ENCODE measurements at regions of chr17 and their contacts with region 1.

Region 1: DNA sequence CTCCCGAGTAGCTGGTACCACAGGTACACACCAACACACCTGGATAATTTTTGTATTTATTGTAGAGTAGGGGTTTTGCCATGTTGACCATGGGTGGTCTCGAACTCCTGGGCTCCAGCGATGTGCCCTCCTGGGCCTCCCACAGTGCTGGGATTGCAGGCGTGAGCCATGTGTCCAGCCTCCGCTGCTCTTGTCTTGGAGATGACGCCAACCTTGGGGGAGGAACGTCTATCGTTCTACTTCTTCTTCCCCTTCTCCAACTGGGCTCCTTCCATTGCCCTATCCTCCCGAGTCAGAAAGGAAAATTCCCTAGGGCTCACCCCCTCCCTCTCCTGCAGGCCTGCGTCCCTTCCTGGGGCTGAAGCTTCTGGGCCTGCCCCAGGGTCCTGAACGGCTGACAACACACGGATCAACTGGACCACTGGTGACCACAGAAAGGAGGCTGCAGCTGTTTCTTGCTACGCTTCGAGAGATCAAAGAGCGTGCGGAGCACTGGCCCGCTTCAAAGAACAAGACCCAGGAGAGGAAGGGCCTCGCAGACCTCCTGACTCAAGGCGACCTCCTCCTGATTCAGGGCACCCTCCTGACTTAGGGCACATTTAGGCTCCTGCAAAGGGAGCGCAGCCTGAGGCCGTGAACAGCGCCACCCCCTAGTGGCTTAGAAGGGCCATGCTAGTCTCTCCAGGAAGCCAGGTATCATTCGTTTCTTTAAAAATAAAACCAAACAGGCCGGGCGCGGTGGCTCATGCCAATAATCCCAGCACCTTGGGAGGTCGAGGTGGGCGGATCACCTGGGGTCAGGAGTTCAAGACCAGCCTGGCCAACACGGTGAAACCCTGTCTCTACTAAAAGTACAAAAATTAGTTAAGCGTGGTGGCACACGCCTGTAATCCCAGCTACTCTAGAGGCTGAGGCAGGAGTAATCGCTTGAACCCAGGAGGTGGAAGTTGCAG is 48.5 kb upstream of the HELZ start:
- DNase-seq: peak; percentile 44 to 84 (median 58)
- ATAC-seq: peak; percentile 98
- H3K4me3 ChIP-seq: peak overlapping the region; percentile 10
- H3K4me3 Mint-ChIP-seq: peak overlapping the region; percentile 20
- H3K27ac ChIP-seq: no peak overlapping the region
- H3K27ac Mint-ChIP-seq: no peak overlapping the region
- H3K4me1 ChIP-seq: peaks cover 10% of the 10 kb centered on the region
- H3K4me1 Mint-ChIP-seq: no peaks in the 10 kb centered on the region
- H3K27me3 ChIP-seq: no peaks in the 10 kb centered on the region
- H3K27me3 Mint-ChIP-seq: no peaks in the 10 kb centered on the region
- CTCF ChIP-seq: peak; percentile 79

Region 2: GRCh38 chr17:66715745-66716156 is 577.8 kb before region 1 on chr17:
- CTCF ChIA-PET with region 1: interaction called, 5 read pairs
- POLR2A ChIA-PET with region 1: no interaction called
- intact Hi-C with region 1: loop called (anchors 5 kb)
- DNase-seq: peak in 4 of 14 experiments; percentile 4 to 60 (median 58)
- ATAC-seq: peak; percentile 48
- H3K4me3 ChIP-seq: no peak overlapping the region
- H3K4me3 Mint-ChIP-seq: no peak overlapping the region
- H3K27ac ChIP-seq: no peak overlapping the region
- H3K27ac Mint-ChIP-seq: no peak overlapping the region
- H3K4me1 ChIP-seq: peaks cover 23% of the 10 kb centered on the region
- H3K4me1 Mint-ChIP-seq: peaks cover 34% of the 10 kb centered on the region
- H3K27me3 ChIP-seq: no peaks in the 10 kb centered on the region
- H3K27me3 Mint-ChIP-seq: no peaks in the 10 kb centered on the region
- CTCF ChIP-seq: peak; percentile 66

Region 3: GRCh38 chr17:67221062-67221998 is 72.2 kb before region 1 on chr17:
- CTCF ChIA-PET with region 1: interaction called, 19 read pairs
- POLR2A ChIA-PET with region 1: interaction called, 3 read pairs
- intact Hi-C with region 1: loop called (anchors 1 kb)
- DNase-seq: peak in 5 of 14 experiments; percentile 22 to 75 (median 63)
- ATAC-seq: peak; percentile 80
- H3K4me3 ChIP-seq: no peak overlapping the region
- H3K4me3 Mint-ChIP-seq: no peak overlapping the region
- H3K27ac ChIP-seq: no peak overlapping the region
- H3K27ac Mint-ChIP-seq: no peak overlapping the region
- H3K4me1 ChIP-seq: peaks cover 8% of the 10 kb centered on the region
- H3K4me1 Mint-ChIP-seq: peaks cover 54% of the 10 kb centered on the region
- H3K27me3 ChIP-seq: no peaks in the 10 kb centered on the region
- H3K27me3 Mint-ChIP-seq: no peaks in the 10 kb centered on the region
- CTCF ChIP-seq: peak; percentile 63

Region 4: GRCh38 chr17:67245073-67245755 is 48.3 kb before region 1 on chr17 and contains the start of gene HELZ:
- CTCF ChIA-PET with region 1: interaction called, 3 read pairs
- POLR2A ChIA-PET with region 1: no interaction called
- intact Hi-C with region 1: loop called in 1 of 2 experiments (anchors 2 kb)
- DNase-seq: peak; percentile 48 to 89 (median 64)
- ATAC-seq: peak; percentile 73
- H3K4me3 ChIP-seq: peak within 1 kb of the TSS; percentile 94
- H3K4me3 Mint-ChIP-seq: peak within 1 kb of the TSS; percentile 97
- H3K27ac ChIP-seq: peak within 1 kb of the TSS; percentile 62 to 74
- H3K27ac Mint-ChIP-seq: peak within 1 kb of the TSS; percentile 89
- H3K4me1 ChIP-seq: peaks cover 36% of the 10 kb centered on the region
- H3K4me1 Mint-ChIP-seq: peaks cover 48% of the 10 kb centered on the region
- H3K27me3 ChIP-seq: no peaks in the 10 kb centered on the region
- H3K27me3 Mint-ChIP-seq: no peaks in the 10 kb centered on the region
- CTCF ChIP-seq: no peak
- total RNA-seq, gene HELZ: 94.8 to 107 TPM